Natural killer cell (primary cell): ENCODE measurements at regions of chr16 and their contacts with region 1.

Region 1: DNA sequence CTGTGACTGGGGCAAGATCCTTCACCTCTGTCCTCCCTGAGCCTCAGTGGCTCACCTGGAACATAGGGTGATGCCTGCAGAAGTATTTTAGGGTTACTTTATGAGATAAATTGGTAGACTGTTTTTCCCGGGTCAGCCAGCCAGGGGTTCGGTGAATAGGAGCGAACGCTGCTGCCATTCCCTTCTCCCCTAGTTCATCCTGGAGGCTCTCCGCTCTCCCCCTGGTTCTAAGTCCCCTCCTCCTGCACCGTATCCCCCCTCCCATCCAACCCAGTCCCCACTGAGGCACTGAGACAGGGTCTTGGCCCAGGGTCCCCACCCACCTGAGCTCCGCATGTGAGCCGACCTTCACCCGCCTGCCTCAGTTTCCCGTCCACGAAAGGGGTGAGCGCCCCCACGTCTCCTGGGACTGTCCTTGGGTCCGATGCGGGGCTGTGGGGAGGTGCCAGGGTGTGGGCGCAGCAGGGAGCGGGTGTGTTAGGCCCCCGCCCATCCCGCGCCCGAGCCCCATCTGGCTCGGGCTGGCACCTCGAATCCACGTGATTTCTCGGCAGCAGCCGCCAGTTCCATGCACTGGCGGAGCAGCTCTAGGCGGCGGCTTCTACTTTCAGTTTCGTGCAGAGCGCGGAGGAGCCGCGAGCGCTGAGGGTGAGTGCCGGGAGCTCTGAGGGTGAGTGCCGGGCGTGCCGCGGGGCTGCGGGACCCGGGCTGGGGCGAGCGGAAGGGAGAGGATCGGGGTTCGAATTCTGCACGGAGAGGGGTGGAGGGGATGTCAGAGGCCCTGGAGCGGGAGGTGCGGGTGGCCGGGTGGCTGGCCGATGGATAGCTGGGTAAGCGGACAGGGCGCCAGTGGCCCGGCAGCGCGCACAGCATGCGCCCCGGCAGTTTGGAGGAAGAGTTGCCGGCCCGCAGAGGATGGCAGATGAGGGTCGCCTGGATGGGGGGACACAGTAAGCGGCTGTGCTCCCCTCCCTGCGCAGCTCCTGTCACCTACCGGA is at the start of gene NLRC5:
- DNase-seq: peak; percentile 83 to 94
- ATAC-seq: peak; percentile 94 to 96 (median 96)
- H3K4me3 ChIP-seq: peak within 1 kb of the TSS; percentile 89
- H3K4me3 Mint-ChIP-seq: peak within 1 kb of the TSS; percentile 89
- H3K27ac ChIP-seq: peak within 1 kb of the TSS; percentile 79
- H3K27ac Mint-ChIP-seq: peak within 1 kb of the TSS; percentile 91 to 99
- H3K4me1 ChIP-seq: peaks cover 70% of the 10 kb centered on the region
- H3K4me1 Mint-ChIP-seq: peaks cover 64 to 68% of the 10 kb centered on the region in 2 donors
- H3K27me3 ChIP-seq: no peaks in the 10 kb centered on the region
- H3K27me3 Mint-ChIP-seq: no peaks in the 10 kb centered on the region
- CTCF ChIP-seq: no peak
- total RNA-seq, gene NLRC5: 320 to 563 (median 535) TPM

Region 2: GRCh38 chr16:55605754-55606336 is 1383.4 kb before region 1 on chr16:
- intact Hi-C with region 1: no loop called
- DNase-seq: no peak
- ATAC-seq: no peak
- H3K4me3 ChIP-seq: no peak overlapping the region
- H3K4me3 Mint-ChIP-seq: no peak overlapping the region
- H3K27ac ChIP-seq: no peak overlapping the region
- H3K27ac Mint-ChIP-seq: no peak overlapping the region
- H3K4me1 ChIP-seq: no peaks in the 10 kb centered on the region
- H3K4me1 Mint-ChIP-seq: no peaks in the 10 kb centered on the region
- H3K27me3 ChIP-seq: no peaks in the 10 kb centered on the region
- H3K27me3 Mint-ChIP-seq: peaks cover 0 to 4% of the 10 kb centered on the region in 2 donors
- CTCF ChIP-seq: no peak

Region 3: DNA sequence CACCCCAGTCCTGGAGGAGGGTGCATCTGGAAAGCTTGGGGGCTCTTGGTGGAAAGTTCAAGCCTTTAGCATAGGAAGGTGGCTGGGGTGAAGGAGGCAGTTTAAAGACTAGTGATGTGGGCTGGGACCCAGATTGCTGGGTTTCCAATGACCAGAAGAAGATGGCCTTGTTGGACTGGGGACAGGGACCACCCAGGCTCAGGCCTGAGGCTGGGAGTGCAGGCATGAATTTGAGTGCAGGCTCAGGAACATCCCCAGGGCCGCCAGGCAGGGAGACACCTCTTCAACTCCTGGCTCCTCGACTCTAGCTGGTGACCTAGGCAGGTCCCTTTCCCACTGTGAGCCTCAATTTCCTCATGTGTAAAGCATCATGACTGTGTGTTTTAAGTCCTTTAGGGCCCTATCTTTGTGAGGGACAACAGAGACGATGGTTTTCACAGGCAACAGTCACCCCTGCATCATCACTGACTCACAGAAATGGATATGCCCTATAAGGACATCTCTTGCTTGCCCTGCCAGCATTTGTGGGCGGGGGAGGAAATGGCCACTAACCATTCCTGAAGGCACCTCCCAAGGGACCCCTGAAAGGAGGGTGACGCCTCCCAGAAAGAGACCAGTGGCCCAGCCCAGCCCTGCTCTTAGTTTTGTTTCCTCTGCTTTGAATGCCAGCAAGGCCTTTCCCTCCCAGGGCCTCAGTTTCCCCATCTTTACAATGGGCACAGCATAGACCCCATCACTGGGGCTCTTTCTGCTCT is 11.2 kb after region 1 on chr16:
- intact Hi-C with region 1: loop called (anchors 1 kb)
- DNase-seq: peak; percentile 40 to 44
- ATAC-seq: peak; percentile 49 to 85 (median 75)
- H3K4me3 ChIP-seq: no peak overlapping the region
- H3K4me3 Mint-ChIP-seq: peak overlapping the region; percentile 52
- H3K27ac ChIP-seq: peak overlapping the region; percentile 72
- H3K27ac Mint-ChIP-seq: peak overlapping the region; percentile 92 to 95
- H3K4me1 ChIP-seq: peaks cover 84% of the 10 kb centered on the region
- H3K4me1 Mint-ChIP-seq: peaks cover 68 to 77% of the 10 kb centered on the region in 2 donors
- H3K27me3 ChIP-seq: no peaks in the 10 kb centered on the region
- H3K27me3 Mint-ChIP-seq: no peaks in the 10 kb centered on the region
- CTCF ChIP-seq: no peak